GM12878 (cell line): ENCODE measurements at regions of chr15 and their contacts with region 1.

Region 1: DNA sequence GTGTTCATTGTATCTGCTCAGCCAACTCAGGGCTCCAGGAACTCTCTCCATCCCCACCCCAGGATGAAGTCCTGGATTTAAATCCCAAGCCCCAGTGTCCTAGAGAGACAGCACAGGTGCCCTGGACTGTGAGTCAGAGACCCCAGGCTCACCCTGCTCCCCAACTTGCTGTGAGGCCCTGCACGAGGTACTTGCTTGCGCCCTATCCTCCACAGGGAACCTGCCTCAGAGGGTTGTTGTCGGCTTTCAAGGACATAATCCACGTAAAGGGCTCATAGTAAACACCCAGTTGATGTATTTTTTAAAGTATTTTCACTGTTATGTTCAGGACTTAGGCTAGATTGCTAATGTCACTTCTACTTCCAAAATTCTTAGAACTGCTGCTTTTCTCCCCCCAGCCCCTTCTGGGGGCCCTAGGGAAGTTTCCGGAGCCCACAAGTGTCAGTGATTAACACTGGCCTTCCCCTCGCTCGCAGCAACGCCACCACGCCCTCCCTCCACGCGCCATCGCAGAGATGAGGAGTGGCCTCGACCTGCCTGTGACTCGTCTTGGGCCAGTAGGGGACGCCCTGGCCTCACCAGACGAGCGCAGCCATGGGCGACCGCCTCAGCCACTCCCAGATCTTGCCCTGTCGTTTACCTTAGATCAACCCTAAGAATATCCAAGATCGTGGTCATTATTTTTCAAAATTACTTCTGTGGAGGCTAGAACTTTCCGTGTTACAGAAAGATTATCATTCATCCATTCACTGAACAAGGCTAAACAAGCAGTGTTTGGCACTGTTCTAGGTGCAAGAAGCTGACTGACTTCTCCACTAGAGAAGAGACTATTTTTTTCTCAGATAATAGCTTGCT is 6.0 kb upstream of the SRP14 start:
- DNase-seq: no peak
- ATAC-seq: peak; percentile 86
- H3K4me3 ChIP-seq: no peak overlapping the region
- H3K27ac ChIP-seq: peak overlapping the region; percentile 92
- H3K4me1 ChIP-seq: peaks cover 67% of the 10 kb centered on the region
- H3K27me3 ChIP-seq: no peaks in the 10 kb centered on the region
- CTCF ChIP-seq: peak; percentile 97 to 100 (median 98); a peak in 5 of 6 replicates
- EP300 ChIP-seq: peak in 1 of 2 experiments; percentile 26; a peak in 1 of 4 replicates
- POLR2A ChIP-seq: no peak
- RAD21 ChIP-seq: peak; percentile 93

Region 2: DNA sequence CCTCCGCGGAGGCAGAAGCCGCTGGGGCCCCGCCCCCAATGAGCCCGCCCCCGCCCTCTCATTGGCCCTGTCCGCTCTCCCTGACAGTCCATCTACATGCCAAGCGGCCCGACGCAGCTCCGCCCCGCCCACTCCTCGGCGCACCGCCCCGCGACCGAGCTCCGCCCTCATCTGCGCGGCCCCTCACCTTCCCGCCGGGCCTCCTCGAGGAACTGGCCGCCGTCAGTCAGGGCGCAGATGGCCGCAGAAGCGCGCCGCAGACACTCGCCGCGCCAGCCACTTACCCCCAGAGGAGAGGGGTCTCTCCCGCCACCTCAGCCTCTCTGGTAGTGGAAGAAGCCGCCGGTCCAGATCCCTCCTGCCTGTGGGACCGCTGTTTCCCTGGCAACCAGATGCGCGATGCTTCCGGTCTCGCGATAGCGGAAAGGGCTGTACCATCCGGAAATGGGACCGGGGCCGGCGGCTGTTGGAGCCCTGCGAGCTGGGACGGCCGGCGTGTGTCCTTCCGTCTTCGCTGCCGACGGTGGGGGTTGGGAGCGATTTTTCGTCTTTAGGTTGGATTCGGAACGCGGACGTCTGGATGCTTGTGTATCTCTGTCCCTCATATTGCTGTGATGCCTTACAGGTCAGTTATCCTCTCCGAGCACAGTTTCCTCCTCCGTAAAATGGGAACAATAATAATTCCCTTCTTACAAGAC is 262.4 kb before region 1 on chr15 and contains the start of gene FSIP1:
- CTCF ChIA-PET with region 1: interaction called, 4 read pairs
- POLR2A ChIA-PET with region 1: interaction called, 3 read pairs
- RAD21 ChIA-PET with region 1: interaction called, 5 read pairs
- SMC1A ChIA-PET with region 1: interaction called, 3 read pairs
- in situ Hi-C with region 1: no loop called
- intact Hi-C with region 1: loop called (anchors 5 kb)
- DNase-seq: peak; percentile 86
- ATAC-seq: peak; percentile 98
- H3K4me3 ChIP-seq: peak within 1 kb of the TSS; percentile 97
- H3K27ac ChIP-seq: peak within 1 kb of the TSS; percentile 93
- H3K4me1 ChIP-seq: peaks cover 7% of the 10 kb centered on the region
- H3K27me3 ChIP-seq: no peaks in the 10 kb centered on the region
- CTCF ChIP-seq: no peak
- EP300 ChIP-seq: peak in 1 of 2 experiments; percentile 27; a peak in 1 of 4 replicates
- POLR2A ChIP-seq: peak; percentile 93
- RAD21 ChIP-seq: no peak
- polyA plus RNA-seq, gene FSIP1: 0.15 to 0.27 TPM

Region 3: GRCh38 chr15:40081691-40082194 is 36.8 kb after region 1 on chr15:
- CTCF ChIA-PET with region 1: interaction called, 10 read pairs
- POLR2A ChIA-PET with region 1: no interaction called
- RAD21 ChIA-PET with region 1: interaction called, 13 read pairs
- SMC1A ChIA-PET with region 1: interaction called, 35 read pairs
- in situ Hi-C with region 1: no loop called
- intact Hi-C with region 1: no loop called
- DNase-seq: no peak
- ATAC-seq: peak; percentile 72
- H3K4me3 ChIP-seq: peak overlapping the region; percentile 12; the same call in 1 of the 2 replicates
- H3K27ac ChIP-seq: no peak overlapping the region; the same call in 1 of the 2 replicates
- H3K4me1 ChIP-seq: peaks cover 37% of the 10 kb centered on the region
- H3K27me3 ChIP-seq: no peaks in the 10 kb centered on the region
- CTCF ChIP-seq: no peak
- EP300 ChIP-seq: peak in 1 of 2 experiments; percentile 25; a peak in 1 of 4 replicates
- POLR2A ChIP-seq: no peak
- RAD21 ChIP-seq: no peak

Region 4: DNA sequence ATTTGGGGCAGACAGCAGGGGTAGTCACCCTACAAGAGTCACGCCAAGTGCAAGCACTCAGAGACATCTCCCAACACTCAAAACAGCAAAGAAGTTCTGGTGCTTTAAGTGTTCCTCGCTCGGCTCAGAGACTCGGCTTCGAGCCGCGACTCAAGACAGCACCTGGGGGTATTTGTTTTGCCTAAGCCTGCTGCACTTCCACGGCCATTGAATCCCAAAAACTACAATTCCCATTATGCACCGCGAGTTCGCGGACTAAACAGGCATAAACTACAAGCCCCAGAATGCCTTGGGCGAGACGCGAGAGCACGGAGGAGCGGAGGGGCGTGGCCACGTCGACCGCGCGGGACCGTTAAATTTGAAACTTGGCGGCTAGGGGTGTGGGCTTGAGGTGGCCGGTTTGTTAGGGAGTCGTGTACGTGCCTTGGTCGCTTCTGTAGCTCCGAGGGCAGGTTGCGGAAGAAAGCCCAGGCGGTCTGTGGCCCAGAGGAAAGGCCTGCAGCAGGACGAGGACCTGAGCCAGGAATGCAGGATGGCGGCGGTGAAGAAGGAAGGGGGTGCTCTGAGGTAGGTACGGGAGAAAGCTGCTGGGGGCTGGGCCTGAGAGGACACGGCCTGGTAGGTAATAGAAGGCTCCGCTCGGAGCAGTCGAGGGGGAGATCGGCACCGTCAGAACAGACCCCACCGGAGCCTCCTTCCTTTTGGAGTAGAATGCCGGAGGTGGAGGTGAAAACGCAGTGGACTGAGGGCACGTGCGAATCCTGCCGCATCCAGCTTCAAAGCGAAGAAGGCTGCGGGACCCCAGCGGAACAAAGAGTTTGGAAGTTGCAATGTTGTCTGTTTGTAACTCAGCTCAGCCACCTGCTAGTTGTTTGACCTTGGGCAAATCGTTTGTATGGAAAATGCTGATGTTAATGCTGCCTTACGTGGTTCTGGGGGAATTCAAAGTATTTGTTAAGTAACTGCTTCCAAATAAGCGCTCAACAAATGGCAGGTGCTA is 116.0 kb after region 1 on chr15 and contains the start of gene BUB1B:
- CTCF ChIA-PET with region 1: interaction called, 41 read pairs
- POLR2A ChIA-PET with region 1: interaction called, 5 read pairs
- RAD21 ChIA-PET with region 1: interaction called, 39 read pairs
- SMC1A ChIA-PET with region 1: interaction called, 95 read pairs
- in situ Hi-C with region 1: loop called (anchors 5 kb)
- intact Hi-C with region 1: loop called (anchors 2 kb)
- DNase-seq: peak; percentile 88
- ATAC-seq: peak; percentile 88
- H3K4me3 ChIP-seq: peak within 1 kb of the TSS; percentile 91
- H3K27ac ChIP-seq: peak within 1 kb of the TSS; percentile 64
- H3K4me1 ChIP-seq: peaks cover 13% of the 10 kb centered on the region
- H3K27me3 ChIP-seq: no peaks in the 10 kb centered on the region
- CTCF ChIP-seq: no peak
- EP300 ChIP-seq: 0 out of 4 replicates have a peak, but pooled peaks of 1 of the 2 experiments have one; percentile 17
- POLR2A ChIP-seq: peak; percentile 92
- RAD21 ChIP-seq: no peak
- polyA plus RNA-seq, gene BUB1B: 29.1 to 38.6 TPM

Region 5: DNA sequence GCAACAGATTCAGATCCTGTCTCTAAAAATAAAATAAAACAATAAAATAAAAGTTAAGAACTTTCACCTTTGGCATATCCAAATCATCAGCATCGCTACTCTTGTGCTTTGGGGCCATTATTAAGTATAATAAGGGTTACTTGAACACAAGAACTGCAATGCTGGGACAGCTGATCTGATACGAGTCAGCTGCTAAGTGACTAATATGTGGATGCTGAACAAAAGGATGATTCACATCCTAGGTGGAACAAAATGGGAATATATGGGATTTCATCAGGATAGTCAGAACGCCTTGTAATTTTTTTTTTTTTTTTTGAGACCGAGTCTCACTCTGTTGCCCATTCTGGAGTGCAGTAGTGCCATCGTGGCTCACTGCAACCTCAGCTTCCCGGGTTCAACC is 145.6 kb after region 1 on chr15:
- CTCF ChIA-PET with region 1: interaction called, 31 read pairs
- POLR2A ChIA-PET with region 1: no interaction called
- RAD21 ChIA-PET with region 1: interaction called, 56 read pairs
- SMC1A ChIA-PET with region 1: interaction called, 33 read pairs
- in situ Hi-C with region 1: loop called (anchors 10 kb)
- intact Hi-C with region 1: no loop called
- DNase-seq: no peak
- ATAC-seq: no peak
- H3K4me3 ChIP-seq: no peak overlapping the region
- H3K27ac ChIP-seq: no peak overlapping the region
- H3K4me1 ChIP-seq: peaks cover 4% of the 10 kb centered on the region; the same call in 1 of the 2 replicates
- H3K27me3 ChIP-seq: no peaks in the 10 kb centered on the region
- CTCF ChIP-seq: no peak
- EP300 ChIP-seq: no peak
- POLR2A ChIP-seq: no peak
- RAD21 ChIP-seq: no peak

Region 6: DNA sequence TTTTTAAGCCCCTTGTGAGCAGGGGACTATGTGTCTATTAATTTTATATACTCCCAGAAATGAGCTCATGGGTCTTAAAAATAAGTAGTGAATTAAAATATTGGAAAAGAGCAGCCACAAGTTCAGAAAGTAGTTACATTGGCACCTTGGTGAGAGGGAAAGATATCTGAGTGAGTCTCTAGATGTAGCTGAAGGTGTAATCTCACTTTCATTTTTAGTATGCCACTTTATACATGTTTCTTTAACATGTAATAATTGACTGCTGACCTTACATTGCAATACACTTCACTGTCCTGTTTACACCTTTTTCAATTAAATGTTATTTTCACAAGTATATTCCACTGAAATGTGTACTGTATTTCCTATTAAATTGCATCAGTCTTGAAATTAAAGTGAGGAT is 181.8 kb after region 1 on chr15:
- CTCF ChIA-PET with region 1: interaction called, 11 read pairs
- POLR2A ChIA-PET with region 1: no interaction called
- RAD21 ChIA-PET with region 1: interaction called, 4 read pairs
- SMC1A ChIA-PET with region 1: interaction called, 6 read pairs
- in situ Hi-C with region 1: no loop called
- intact Hi-C with region 1: no loop called
- DNase-seq: no peak
- ATAC-seq: peak; percentile 83
- H3K4me3 ChIP-seq: no peak overlapping the region
- H3K27ac ChIP-seq: no peak overlapping the region
- H3K4me1 ChIP-seq: no peaks in the 10 kb centered on the region; the same call in 1 of the 2 replicates
- H3K27me3 ChIP-seq: no peaks in the 10 kb centered on the region
- CTCF ChIP-seq: no peak
- EP300 ChIP-seq: no peak
- POLR2A ChIP-seq: no peak
- RAD21 ChIP-seq: no peak